Pancreas (tissue), 10 donors: ENCODE measurements at regions of chr4 and their contacts with region 1.

Region 1: GRCh38 chr4:150867148-150867547 is 147.9 kb downstream of the LRBA start:
- DNase-seq: peak in 3 of 6 donors; percentile 13 to 33 (median 30)
- ATAC-seq: peak; percentile 88 to 97 (median 95)
- H3K4me3 ChIP-seq: no peak overlapping the region
- H3K27ac ChIP-seq: no peak overlapping the region
- H3K4me1 ChIP-seq: no peaks in the 10 kb centered on the region
- H3K27me3 ChIP-seq: no peaks in the 10 kb centered on the region
- CTCF ChIP-seq: peak; percentile 28 to 48 (median 41)

Region 2: GRCh38 chr4:150297861-150298474 is 569.2 kb before region 1 on chr4:
- intact Hi-C with region 1: loop called in 2 of 3 experiments (anchors 5 to 10 kb)
- DNase-seq: peak in 2 of 6 donors; percentile 20 to 36
- ATAC-seq: peak; percentile 50 to 75 (median 66)
- H3K4me3 ChIP-seq: no peak overlapping the region
- H3K27ac ChIP-seq: no peak overlapping the region
- H3K4me1 ChIP-seq: no peaks in the 10 kb centered on the region
- H3K27me3 ChIP-seq: no peaks in the 10 kb centered on the region
- CTCF ChIP-seq: peak in 3 of 4 donors; percentile 33 to 50 (median 40)

Region 3: DNA sequence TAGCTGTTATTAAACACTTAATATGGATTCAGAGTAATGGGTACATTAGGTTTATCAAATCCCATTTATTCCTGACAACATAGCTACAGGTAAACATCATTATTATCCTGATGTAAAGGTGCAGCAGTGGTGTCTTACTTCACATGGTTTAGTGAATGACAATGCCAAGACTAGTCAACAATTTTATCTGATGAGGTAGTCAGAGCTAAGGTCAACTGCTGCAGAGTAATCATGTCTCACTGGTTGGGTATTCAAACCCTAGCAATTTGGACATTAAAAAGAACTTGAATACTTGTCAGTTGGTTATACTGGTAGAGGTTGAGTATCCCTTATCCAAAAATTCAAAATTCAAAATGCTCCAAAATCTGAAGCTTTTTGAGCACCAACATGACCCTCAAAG is 167.5 kb before region 1 on chr4:
- intact Hi-C with region 1: no loop called
- DNase-seq: no peak
- ATAC-seq: no peak
- H3K4me3 ChIP-seq: no peak overlapping the region
- H3K27ac ChIP-seq: no peak overlapping the region
- H3K4me1 ChIP-seq: peaks cover 0 to 2% (median 0%) of the 10 kb centered on the region in 3 donors
- H3K27me3 ChIP-seq: no peaks in the 10 kb centered on the region
- CTCF ChIP-seq: no peak